BJ (cell line): ENCODE measurements at regions of chr15 and their contacts with region 1.

Region 1: GRCh38 chr15:72272213-72273002 is at the start of gene PARP6:
- DNase-seq: peak; percentile 93
- H3K4me3 ChIP-seq: peak within 1 kb of the TSS; percentile 88
- H3K27me3 ChIP-seq: no peaks in the 10 kb centered on the region
- CTCF ChIP-seq: peak; percentile 69
- polyA plus RNA-seq, gene PARP6: 69.7 and 73.4 TPM in 2 replicates

Region 2: GRCh38 chr15:72285927-72286516 is 13.6 kb after region 1 on chr15:
- CTCF ChIA-PET with region 1: interaction called, 16 read pairs
- POLR2A ChIA-PET with region 1: no interaction called
- DNase-seq: no peak
- H3K4me3 ChIP-seq: no peak overlapping the region
- H3K27me3 ChIP-seq: no peaks in the 10 kb centered on the region; the same call in 1 of the 2 replicates
- CTCF ChIP-seq: peak; percentile 61